ENCODE measurements at regions of chr14 and their contacts with region 1.

Region 1: GRCh38 chr14:73759714-73760597 is 45.8 kb upstream of the PNMA1 start:
- DNase-seq: peak; percentile 96
- H3K4me3 Mint-ChIP-seq: peak overlapping the region; percentile 87
- H3K27ac Mint-ChIP-seq: peak overlapping the region; percentile 92
- H3K4me1 Mint-ChIP-seq: peaks cover 79% of the 10 kb centered on the region
- H3K27me3 Mint-ChIP-seq: no peaks in the 10 kb centered on the region

Region 2: DNA sequence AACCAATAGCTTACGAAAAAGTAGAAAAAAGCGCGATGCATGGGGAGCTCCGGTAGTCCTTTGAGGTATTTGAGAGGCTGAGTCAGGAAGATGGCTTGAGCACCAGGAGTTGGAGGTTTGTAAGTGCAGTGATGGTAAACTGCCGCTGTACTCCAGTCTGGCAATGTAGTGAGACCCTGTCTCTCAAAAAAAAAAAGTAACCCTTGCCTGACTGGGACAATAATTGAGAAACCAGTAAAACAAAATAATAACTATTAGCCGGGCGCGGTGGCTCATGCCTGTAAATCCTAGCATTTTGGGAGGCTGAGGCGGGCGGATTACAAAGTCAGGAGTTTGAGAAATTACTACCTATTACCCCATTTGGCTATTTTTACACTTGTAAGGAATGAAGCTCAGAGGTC is 191.6 kb before region 1 on chr14:
- CTCF ChIA-PET with region 1: interaction called, 3 read pairs
- POLR2A ChIA-PET with region 1: interaction called, 10 read pairs
- DNase-seq: no peak
- H3K4me3 Mint-ChIP-seq: peak overlapping the region; percentile 85
- H3K27ac Mint-ChIP-seq: peak overlapping the region; percentile 91
- H3K4me1 Mint-ChIP-seq: peaks cover 41% of the 10 kb centered on the region
- H3K27me3 Mint-ChIP-seq: no peaks in the 10 kb centered on the region

Region 3: GRCh38 chr14:73728717-73729330 is 31.1 kb before region 1 on chr14:
- CTCF ChIA-PET with region 1: interaction called, 57 read pairs
- POLR2A ChIA-PET with region 1: interaction called, 9 read pairs
- DNase-seq: peak; percentile 88
- H3K4me3 Mint-ChIP-seq: no peak overlapping the region
- H3K27ac Mint-ChIP-seq: peak overlapping the region; percentile 62
- H3K4me1 Mint-ChIP-seq: peaks cover 43% of the 10 kb centered on the region
- H3K27me3 Mint-ChIP-seq: no peaks in the 10 kb centered on the region

Region 4: GRCh38 chr14:73741386-73741875 is 18.5 kb before region 1 on chr14:
- CTCF ChIA-PET with region 1: interaction called, 151 read pairs
- POLR2A ChIA-PET with region 1: interaction called, 372 read pairs
- DNase-seq: peak; percentile 75
- H3K4me3 Mint-ChIP-seq: peak overlapping the region; percentile 76
- H3K27ac Mint-ChIP-seq: peak overlapping the region; percentile 98
- H3K4me1 Mint-ChIP-seq: peaks cover 74% of the 10 kb centered on the region
- H3K27me3 Mint-ChIP-seq: no peaks in the 10 kb centered on the region

Region 5: GRCh38 chr14:73771848-73772638 is 12.1 kb after region 1 on chr14:
- CTCF ChIA-PET with region 1: interaction called, 31 read pairs
- POLR2A ChIA-PET with region 1: interaction called, 53 read pairs
- DNase-seq: peak; percentile 73
- H3K4me3 Mint-ChIP-seq: peak overlapping the region; percentile 12
- H3K27ac Mint-ChIP-seq: peak overlapping the region; percentile 80
- H3K4me1 Mint-ChIP-seq: peaks cover 71% of the 10 kb centered on the region
- H3K27me3 Mint-ChIP-seq: no peaks in the 10 kb centered on the region

Region 6: DNA sequence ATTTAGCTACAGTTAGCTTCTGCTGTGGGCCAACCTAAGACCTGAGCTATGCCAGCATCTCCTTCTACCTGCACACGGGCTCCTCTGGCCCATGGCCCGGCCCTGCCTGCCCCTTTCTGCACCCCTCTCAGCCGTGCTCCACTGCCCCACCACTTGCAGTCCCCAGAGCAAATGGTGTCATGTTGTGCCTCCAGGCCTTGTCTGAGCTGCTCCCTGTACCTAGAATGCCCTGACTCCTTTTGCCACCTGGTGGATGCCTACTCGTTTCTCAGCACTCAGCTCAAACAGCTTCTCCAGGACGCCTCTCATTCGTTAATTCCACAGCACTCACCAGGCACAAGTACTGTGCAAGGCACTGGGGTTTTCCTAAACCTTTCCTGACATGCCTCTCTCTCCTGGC is 17.4 kb after region 1 on chr14:
- CTCF ChIA-PET with region 1: interaction called, 31 read pairs
- POLR2A ChIA-PET with region 1: interaction called, 53 read pairs
- DNase-seq: no peak
- H3K4me3 Mint-ChIP-seq: no peak overlapping the region
- H3K27ac Mint-ChIP-seq: no peak overlapping the region
- H3K4me1 Mint-ChIP-seq: peaks cover 59% of the 10 kb centered on the region
- H3K27me3 Mint-ChIP-seq: no peaks in the 10 kb centered on the region

Region 7: GRCh38 chr14:73886449-73887317 is 126.7 kb after region 1 on chr14 and contains the start of gene ZNF410:
- CTCF ChIA-PET with region 1: interaction called, 4 read pairs
- POLR2A ChIA-PET with region 1: interaction called, 22 read pairs
- DNase-seq: peak; percentile 88
- H3K4me3 Mint-ChIP-seq: peak within 1 kb of the TSS; percentile 96
- H3K27ac Mint-ChIP-seq: peak within 1 kb of the TSS; percentile 94
- H3K4me1 Mint-ChIP-seq: peaks cover 51% of the 10 kb centered on the region
- H3K27me3 Mint-ChIP-seq: no peaks in the 10 kb centered on the region
- total RNA-seq, gene ZNF410: 54.2 to 56.5 TPM

Region 8: GRCh38 chr14:74144789-74145188 is 384.8 kb after region 1 on chr14:
- CTCF ChIA-PET with region 1: no interaction called
- POLR2A ChIA-PET with region 1: no interaction called
- DNase-seq: no peak
- H3K4me3 Mint-ChIP-seq: no peak overlapping the region
- H3K27ac Mint-ChIP-seq: no peak overlapping the region
- H3K4me1 Mint-ChIP-seq: peaks cover 9% of the 10 kb centered on the region
- H3K27me3 Mint-ChIP-seq: no peaks in the 10 kb centered on the region